ENCODE measurements at regions of chr3 and their contacts with region 1.

Region 1: DNA sequence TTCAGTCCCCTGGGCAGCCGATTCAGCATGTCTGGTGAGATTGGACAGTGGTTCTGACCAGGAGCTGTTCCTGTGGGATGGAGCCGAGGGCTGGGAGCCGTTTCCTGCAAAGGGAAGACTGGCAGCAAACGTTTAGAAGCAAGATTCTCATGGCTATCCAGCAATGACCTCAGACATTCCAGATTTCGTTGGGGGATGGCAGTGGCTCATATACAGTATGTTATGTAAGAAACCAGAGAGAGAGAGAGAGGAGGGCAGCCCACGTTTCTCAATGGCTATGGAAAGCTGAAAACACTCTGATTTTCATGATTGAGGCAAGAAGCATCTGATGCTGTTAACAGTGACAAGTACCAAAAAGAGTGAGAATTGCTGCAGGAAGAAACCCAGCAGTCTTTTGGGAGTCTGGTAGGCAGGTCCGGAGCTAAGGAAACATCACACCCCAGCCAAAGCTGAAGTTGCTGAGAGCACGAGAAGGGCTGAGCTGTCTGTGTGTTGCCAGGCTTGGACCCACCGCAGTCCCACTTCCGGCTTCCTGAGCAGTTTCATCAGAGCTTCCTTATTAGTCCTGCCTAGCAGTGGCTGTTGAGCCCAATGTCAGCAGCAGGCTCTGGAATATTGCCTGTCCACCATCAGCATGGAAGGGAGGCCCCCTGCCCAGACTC is 25.6 kb upstream of the VPS8 start:
- DNase-seq: peak; percentile 72
- ATAC-seq: peak; percentile 93
- H3K4me3 Mint-ChIP-seq: no peak overlapping the region
- H3K27ac Mint-ChIP-seq: no peak overlapping the region
- H3K4me1 Mint-ChIP-seq: peaks cover 28% of the 10 kb centered on the region
- H3K27me3 Mint-ChIP-seq: peaks cover 14% of the 10 kb centered on the region

Region 2: DNA sequence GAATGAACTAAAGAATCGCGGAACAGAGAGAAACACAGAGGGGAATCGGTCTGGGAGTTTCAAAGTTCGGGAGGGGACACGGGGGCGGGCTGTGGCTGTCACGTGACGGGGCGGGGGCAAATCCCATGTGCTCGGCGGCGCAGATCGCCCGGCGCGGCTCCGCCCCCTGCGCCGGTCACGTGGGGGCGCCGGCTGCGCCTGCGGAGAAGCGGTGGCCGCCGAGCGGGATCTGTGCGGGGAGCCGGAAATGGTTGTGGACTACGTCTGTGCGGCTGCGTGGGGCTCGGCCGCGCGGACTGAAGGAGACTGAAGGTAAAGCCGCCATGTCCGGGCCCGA is 472.1 kb before region 1 on chr3 and contains the start of gene EIF4G1:
- CTCF ChIA-PET with region 1: no interaction called
- DNase-seq: peak; percentile 94
- ATAC-seq: peak; percentile 87
- H3K4me3 Mint-ChIP-seq: peak within 1 kb of the TSS; percentile 86
- H3K27ac Mint-ChIP-seq: peak within 1 kb of the TSS; percentile 87
- H3K4me1 Mint-ChIP-seq: peaks cover 28% of the 10 kb centered on the region
- H3K27me3 Mint-ChIP-seq: no peaks in the 10 kb centered on the region
- total RNA-seq, gene EIF4G1: 348 to 471 TPM

Region 3: GRCh38 chr3:184568924-184569829 is 217.2 kb before region 1 on chr3:
- CTCF ChIA-PET with region 1: no interaction called
- DNase-seq: no peak
- ATAC-seq: peak; percentile 35
- H3K4me3 Mint-ChIP-seq: no peak overlapping the region
- H3K27ac Mint-ChIP-seq: no peak overlapping the region
- H3K4me1 Mint-ChIP-seq: peaks cover 5% of the 10 kb centered on the region
- H3K27me3 Mint-ChIP-seq: peaks cover 66% of the 10 kb centered on the region

Region 4: GRCh38 chr3:184808021-184808420 is 21.6 kb after region 1 on chr3:
- CTCF ChIA-PET with region 1: interaction called, 27 read pairs
- DNase-seq: no peak
- ATAC-seq: no peak
- H3K4me3 Mint-ChIP-seq: no peak overlapping the region
- H3K27ac Mint-ChIP-seq: no peak overlapping the region
- H3K4me1 Mint-ChIP-seq: peaks cover 26% of the 10 kb centered on the region
- H3K27me3 Mint-ChIP-seq: peaks cover 3% of the 10 kb centered on the region